Sciatic nerve (tissue), 2 donors: ENCODE measurements at regions of chr3 and their contacts with region 1.

Region 1: GRCh38 chr3:8668216-8668615 is 23.6 kb upstream of the SSUH2 start:
- DNase-seq: no peak
- ATAC-seq: no peak

Region 2: GRCh38 chr3:8678751-8679150 is 10.5 kb after region 1 on chr3:
- intact Hi-C with region 1: loop called (anchors 2 kb)
- DNase-seq: no peak
- ATAC-seq: no peak

Region 3: DNA sequence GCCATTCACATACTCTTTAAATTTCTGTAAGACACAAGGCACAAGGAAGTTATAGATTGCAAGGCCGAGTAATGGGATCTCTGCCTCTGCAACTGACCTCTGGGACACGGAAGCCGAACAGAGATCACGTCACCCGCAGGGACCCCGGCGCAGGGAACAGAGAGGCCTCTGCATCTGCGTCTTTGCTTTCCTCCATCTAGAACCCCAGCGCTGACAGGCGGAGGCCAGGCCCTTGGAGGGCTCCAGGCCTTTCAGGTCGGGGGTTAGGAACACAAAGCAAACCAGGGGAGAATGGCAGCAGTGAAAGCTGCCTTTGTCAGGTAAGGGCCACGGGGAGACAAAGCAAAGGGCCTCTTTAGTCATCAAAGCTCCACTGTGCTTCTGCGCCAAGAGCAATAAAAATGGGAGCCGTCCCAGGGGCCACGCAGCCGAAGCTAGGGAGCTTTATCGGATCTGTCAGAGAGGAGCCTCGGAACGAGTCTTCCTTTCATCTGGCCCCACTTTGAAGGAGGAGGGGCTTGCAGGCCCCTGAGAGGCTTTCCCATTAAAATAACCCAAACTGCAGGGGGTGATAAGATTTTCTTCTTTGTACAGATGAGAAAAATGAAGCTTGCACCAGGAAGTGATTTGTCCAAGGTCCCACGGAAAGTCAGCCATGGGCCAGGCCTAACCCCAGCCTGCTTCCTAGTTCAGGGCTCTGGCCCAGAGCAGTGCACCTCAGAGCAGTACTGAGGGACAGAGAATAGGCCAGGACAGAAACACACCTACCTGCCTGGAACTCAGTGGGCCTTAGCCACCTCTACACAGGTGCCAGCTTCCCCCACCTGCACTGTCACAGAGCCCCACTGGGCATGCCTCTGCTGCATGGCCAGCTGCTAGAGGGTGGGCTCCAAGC is 379.5 kb after region 1 on chr3:
- intact Hi-C with region 1: no loop called
- DNase-seq: no peak
- ATAC-seq: no peak